Mucosa of descending colon (tissue), 3 donors: ENCODE measurements at regions of chr3 and their contacts with region 1.

Region 1: DNA sequence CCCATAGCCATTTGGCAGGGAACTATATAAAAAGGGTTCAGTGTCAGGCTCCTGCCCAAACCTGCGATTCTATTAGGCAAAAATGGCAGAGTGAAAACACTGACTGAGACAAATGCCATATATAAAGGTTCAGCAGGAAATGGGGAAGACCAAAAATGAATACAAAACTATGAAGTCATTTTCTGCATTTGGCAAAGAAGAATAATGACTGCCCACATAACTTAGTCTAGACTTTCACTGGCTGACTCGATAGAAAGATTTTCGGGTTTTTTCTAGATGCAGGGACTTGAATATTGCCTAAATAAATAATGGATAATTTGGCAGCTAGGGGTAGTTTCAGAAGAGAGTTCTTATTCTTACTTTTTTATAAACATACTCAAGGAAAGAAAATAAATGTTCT is 178.0 kb downstream of the TPRG1 start:
- DNase-seq: no peak
- ATAC-seq: no peak
- H3K4me3 ChIP-seq: no peak overlapping the region
- H3K4me1 ChIP-seq: peaks cover 2% of the 10 kb centered on the region
- CTCF ChIP-seq: no peak

Region 2: DNA sequence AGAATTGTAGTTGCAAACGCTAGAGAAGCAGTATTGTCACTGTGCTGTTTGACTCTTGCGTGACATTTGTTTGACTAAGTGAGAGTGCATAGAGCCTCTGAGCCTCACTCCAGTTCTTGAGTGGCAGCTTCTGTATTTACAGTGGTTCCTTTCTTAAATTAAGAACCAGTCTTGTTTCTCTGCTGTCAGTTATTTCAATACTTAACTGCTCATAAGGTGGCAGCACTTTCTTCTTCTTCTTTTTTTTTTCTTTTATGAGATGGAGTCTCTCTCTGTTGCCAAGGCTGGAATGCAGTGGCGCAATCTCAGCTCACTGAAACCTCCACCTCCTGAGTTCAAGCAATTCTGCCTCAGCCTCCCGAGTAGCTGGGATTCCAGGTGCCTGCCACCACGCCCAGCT is 823.7 kb before region 1 on chr3:
- intact Hi-C with region 1: no loop called
- DNase-seq: no peak
- ATAC-seq: no peak
- H3K4me3 ChIP-seq: no peak overlapping the region
- H3K4me1 ChIP-seq: no peaks in the 10 kb centered on the region
- CTCF ChIP-seq: no peak

Region 3: GRCh38 chr3:189389346-189389745 is 39.6 kb after region 1 on chr3:
- intact Hi-C with region 1: loop called in 1 of 2 experiments (anchors 5 kb)
- DNase-seq: no peak
- ATAC-seq: no peak
- H3K4me3 ChIP-seq: no peak overlapping the region
- H3K4me1 ChIP-seq: peaks cover 11% of the 10 kb centered on the region
- CTCF ChIP-seq: no peak